ENCODE measurements at regions of chr5 and their contacts with region 1.

Region 1: DNA sequence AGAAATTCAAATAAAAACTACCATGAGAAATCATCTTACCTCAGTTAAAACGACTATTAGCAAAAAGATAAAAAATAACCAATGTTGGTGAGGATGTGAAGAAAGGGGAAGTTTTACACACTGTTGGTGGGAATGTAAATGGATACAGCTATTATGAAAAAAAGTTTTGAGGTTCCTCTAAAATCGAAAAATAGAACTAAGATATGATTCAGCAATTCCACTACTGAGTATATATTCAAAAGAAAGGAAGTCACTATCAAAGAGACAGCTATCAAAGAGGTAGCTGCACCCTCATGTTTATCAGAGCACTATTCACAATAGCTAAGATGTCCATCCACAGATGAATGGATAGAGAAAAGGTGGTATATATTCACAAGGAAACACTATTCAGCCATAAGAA is 1888.4 kb downstream of the MAT2B start:
- DNase-seq: no peak
- H3K4me3 ChIP-seq: no peak overlapping the region
- H3K27ac ChIP-seq: no peak overlapping the region
- H3K4me1 ChIP-seq: no peaks in the 10 kb centered on the region
- H3K27me3 ChIP-seq: no peaks in the 10 kb centered on the region
- CTCF ChIP-seq: no peak
- POLR2A ChIP-seq: no peak

Region 2: GRCh38 chr5:164296603-164297080 is 1097.2 kb before region 1 on chr5:
- intact Hi-C with region 1: loop called (anchors 5 kb)
- DNase-seq: no peak
- H3K4me3 ChIP-seq: no peak overlapping the region
- H3K27ac ChIP-seq: no peak overlapping the region
- H3K4me1 ChIP-seq: no peaks in the 10 kb centered on the region
- H3K27me3 ChIP-seq: no peaks in the 10 kb centered on the region
- CTCF ChIP-seq: no peak
- POLR2A ChIP-seq: no peak

Measured in breast epithelium (tissue), 4 donors.